Mammary epithelial cell (primary cell): ENCODE measurements at regions of chr1 and their contacts with region 1.

Region 1: GRCh38 chr1:216742625-216743024 is 19.4 kb upstream of the ESRRG start:
- DNase-seq: no peak
- H3K4me3 ChIP-seq: no peak overlapping the region
- H3K27ac ChIP-seq: no peak overlapping the region
- H3K4me1 ChIP-seq: no peaks in the 10 kb centered on the region
- H3K27me3 ChIP-seq: no peaks in the 10 kb centered on the region
- CTCF ChIP-seq: peak in 1 of 2 donors; percentile 44

Region 2: DNA sequence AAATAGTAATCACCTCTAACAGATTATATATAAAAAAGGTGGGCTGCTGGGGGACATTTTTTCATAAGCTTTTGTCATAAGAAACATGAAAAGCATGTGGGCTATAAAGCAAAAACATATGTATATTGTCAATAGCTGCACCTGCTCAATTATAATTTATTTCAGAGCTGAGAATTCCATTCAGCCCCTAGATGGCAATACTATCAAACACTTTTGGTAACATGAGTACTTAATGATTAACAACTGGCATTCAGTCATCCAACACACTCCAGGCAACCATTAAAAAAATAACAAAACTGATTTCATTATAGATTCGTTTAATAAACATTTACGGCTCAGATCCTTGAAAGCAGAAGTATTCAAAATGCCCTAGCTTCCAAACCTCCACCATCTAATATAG is 1060.4 kb before region 1 on chr1:
- CTCF ChIA-PET with region 1: no interaction called
- dilution Hi-C with region 1: no loop called
- in situ Hi-C with region 1: no loop called
- intact Hi-C with region 1: loop called (anchors 5 kb)
- DNase-seq: no peak
- H3K4me3 ChIP-seq: no peak overlapping the region
- H3K27ac ChIP-seq: no peak overlapping the region
- H3K4me1 ChIP-seq: no peaks in the 10 kb centered on the region
- H3K27me3 ChIP-seq: no peaks in the 10 kb centered on the region
- CTCF ChIP-seq: peak in 1 of 2 donors; percentile 41

Region 3: GRCh38 chr1:216653031-216653430 is 89.6 kb before region 1 on chr1:
- CTCF ChIA-PET with region 1: no interaction called
- dilution Hi-C with region 1: no loop called
- in situ Hi-C with region 1: no loop called
- intact Hi-C with region 1: no loop called
- DNase-seq: no peak
- H3K4me3 ChIP-seq: no peak overlapping the region
- H3K27ac ChIP-seq: no peak overlapping the region
- H3K4me1 ChIP-seq: no peaks in the 10 kb centered on the region
- H3K27me3 ChIP-seq: no peaks in the 10 kb centered on the region
- CTCF ChIP-seq: no peak

Region 4: DNA sequence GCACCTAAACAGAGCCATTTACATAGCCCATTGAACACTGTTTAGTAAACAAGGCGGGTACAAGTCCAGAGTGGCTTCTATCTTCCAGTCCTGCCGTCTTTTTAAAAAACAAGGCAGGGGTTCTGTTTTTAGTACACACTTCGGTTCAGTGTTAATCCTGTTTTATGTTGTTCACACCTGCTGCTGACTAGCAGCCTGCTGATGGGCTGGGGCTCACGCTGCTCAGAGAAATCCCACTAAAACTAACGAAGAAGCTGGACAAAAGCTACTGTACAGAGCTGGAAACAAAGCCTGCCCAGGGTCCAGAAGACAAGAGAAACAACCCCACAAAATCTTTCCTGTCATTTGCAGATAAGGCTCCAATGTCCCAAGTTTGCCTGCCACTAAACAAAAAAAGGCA is 32.6 kb before region 1 on chr1:
- CTCF ChIA-PET with region 1: no interaction called
- dilution Hi-C with region 1: no loop called
- in situ Hi-C with region 1: no loop called
- intact Hi-C with region 1: no loop called
- DNase-seq: no peak
- H3K4me3 ChIP-seq: no peak overlapping the region
- H3K27ac ChIP-seq: no peak overlapping the region
- H3K4me1 ChIP-seq: no peaks in the 10 kb centered on the region
- H3K27me3 ChIP-seq: peaks cover 6% of the 10 kb centered on the region
- CTCF ChIP-seq: no peak

Region 5: GRCh38 chr1:217004776-217005436 is 262.3 kb after region 1 on chr1:
- CTCF ChIA-PET with region 1: no interaction called
- dilution Hi-C with region 1: no loop called
- in situ Hi-C with region 1: no loop called
- intact Hi-C with region 1: no loop called
- DNase-seq: no peak
- H3K4me3 ChIP-seq: no peak overlapping the region
- H3K27ac ChIP-seq: no peak overlapping the region
- H3K4me1 ChIP-seq: peaks cover under 1% of the 10 kb centered on the region
- H3K27me3 ChIP-seq: no peaks in the 10 kb centered on the region
- CTCF ChIP-seq: no peak